Transverse colon (tissue), 4 donors: ENCODE measurements at regions of chr4 and their contacts with region 1.

Region 1: DNA sequence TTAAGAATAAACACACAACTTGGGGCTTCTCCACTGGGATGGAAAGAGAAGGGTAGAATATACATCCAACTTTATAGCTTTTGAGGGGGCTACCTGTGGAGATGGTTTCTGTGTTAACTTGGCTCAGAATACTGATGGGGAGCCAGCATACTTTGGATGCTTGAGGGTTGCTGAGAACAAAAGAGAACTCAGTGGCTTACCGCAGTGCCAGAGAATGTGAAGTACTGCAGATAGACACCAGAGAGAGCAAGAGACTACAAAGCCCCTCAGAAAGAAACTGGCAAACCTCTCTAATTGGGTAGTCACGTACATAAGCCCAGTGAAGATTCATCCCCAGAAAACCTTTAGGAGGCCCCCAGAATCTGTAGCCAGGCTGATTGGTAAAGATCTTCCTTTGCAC is 214.4 kb downstream of the DCHS2 start:
- DNase-seq: no peak
- H3K4me3 ChIP-seq: no peak overlapping the region
- H3K27ac ChIP-seq: no peak overlapping the region
- H3K4me1 ChIP-seq: no peaks in the 10 kb centered on the region
- H3K27me3 ChIP-seq: no peaks in the 10 kb centered on the region
- CTCF ChIP-seq: no peak
- EP300 ChIP-seq: no peak
- POLR2A ChIP-seq: no peak

Region 2: DNA sequence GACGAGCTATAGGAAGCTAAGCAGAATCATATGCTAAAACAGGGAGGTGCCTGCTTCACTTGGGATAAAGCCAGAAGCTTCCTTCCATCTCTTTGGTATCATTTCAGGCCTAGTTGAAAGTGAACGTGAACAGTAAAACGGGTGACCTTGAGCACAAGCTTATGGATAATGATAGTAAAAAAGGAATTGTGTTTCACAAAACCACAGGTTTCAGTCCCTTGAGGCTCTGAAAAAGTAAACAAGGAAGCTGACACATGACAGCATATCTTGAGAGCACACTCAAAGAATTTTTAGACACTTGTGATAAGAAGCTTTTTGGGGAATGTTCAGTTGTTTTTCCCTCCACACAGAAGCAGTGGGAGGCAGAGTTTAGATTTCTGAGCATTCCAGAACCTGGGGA is 71.7 kb before region 1 on chr4:
- in situ Hi-C with region 1: no loop called
- intact Hi-C with region 1: no loop called
- DNase-seq: no peak
- H3K4me3 ChIP-seq: no peak overlapping the region
- H3K27ac ChIP-seq: no peak overlapping the region
- H3K4me1 ChIP-seq: no peaks in the 10 kb centered on the region
- H3K27me3 ChIP-seq: no peaks in the 10 kb centered on the region
- CTCF ChIP-seq: no peak
- EP300 ChIP-seq: no peak
- POLR2A ChIP-seq: no peak

Region 3: DNA sequence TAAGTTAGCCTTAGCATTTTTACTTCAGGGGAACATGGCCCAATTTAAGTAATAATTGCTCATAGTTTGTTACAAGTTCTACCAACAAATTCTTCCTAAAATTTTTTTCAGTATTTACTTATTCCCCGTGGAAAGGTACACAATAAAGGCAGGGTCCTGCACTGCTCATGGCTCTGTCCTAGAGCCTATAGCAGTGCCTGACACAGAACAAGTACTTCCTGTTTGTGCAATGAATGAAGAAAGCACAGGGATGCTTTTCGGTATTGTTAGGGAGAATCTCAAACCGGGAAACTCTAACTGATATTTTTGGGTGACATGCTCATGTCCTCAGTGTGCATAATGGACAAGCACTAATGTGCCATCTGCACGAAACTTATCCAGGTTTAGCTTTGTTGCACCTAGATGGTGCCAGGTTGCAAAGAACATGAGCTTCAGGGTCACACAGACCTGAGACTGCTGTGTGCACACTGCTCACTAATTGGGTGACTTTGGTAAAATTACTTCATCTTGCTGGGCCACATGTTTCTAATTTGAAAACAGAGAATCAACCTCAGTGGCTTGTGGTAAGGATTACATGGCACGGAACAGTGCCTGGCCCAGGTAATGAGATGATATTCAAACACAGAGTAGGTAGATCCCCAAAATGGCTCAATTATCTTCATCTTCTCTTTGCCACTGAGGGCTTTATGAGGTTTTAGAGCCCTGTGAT is 755.5 kb after region 1 on chr4:
- in situ Hi-C with region 1: no loop called
- intact Hi-C with region 1: loop called (anchors 10 kb)
- DNase-seq: no peak
- H3K4me3 ChIP-seq: no peak overlapping the region
- H3K27ac ChIP-seq: no peak overlapping the region
- H3K4me1 ChIP-seq: no peaks in the 10 kb centered on the region
- H3K27me3 ChIP-seq: no peaks in the 10 kb centered on the region
- CTCF ChIP-seq: no peak
- EP300 ChIP-seq: no peak
- POLR2A ChIP-seq: no peak